WTC11 (cell line): ENCODE measurements at regions of chr17 and their contacts with region 1.

Region 1: DNA sequence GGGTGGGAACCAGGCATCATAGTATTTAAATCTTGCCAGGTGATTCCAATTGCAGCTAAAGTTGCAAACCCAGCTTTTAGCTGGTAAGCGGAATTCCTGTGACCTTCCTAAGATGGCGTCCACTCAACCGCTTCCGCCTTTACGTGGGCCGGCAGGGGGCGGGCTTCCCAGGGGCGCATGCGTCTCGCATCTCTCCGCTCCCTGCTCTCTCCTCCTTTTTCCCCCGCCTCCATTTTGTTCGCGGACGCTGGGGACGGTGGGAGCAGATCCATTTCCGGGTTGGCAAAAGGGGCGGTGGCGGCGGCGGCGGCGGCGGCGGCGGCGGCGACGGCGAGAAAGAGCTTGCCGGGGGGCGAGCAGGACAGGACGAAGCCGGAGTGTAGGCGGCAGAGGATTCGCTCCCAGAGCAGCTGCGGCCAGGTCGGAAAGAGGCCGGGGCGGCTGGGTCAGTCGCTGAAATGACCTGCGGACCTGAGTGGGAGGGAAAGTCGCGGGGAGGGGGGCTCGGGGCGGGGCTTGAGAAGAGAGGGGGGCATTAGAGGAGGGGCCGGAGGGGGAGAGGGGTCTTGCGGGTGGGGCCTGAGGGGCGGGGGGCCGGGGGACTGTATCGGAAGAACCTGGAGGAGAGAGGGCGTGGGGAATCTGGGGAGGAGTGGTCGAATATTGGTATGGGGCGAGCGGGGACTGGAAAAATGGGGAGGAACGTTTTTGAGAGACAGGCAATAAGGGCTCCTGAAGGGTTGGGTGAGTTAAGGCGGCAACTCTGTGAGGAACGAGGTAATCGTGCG is at the start of gene WIPF2:
- DNase-seq: peak; percentile 99
- ATAC-seq: peak; percentile 90
- H3K4me3 Mint-ChIP-seq: peak within 1 kb of the TSS; percentile 90
- H3K27ac Mint-ChIP-seq: peak within 1 kb of the TSS; percentile 100
- H3K4me1 Mint-ChIP-seq: peaks cover 18% of the 10 kb centered on the region
- H3K27me3 Mint-ChIP-seq: no peaks in the 10 kb centered on the region; the same call in 1 of the 2 replicates
- CTCF ChIP-seq: peak; percentile 81
- total RNA-seq, gene WIPF2: 23.0 to 24.6 TPM (median 23.8 TPM) in 3 replicates

Region 2: DNA sequence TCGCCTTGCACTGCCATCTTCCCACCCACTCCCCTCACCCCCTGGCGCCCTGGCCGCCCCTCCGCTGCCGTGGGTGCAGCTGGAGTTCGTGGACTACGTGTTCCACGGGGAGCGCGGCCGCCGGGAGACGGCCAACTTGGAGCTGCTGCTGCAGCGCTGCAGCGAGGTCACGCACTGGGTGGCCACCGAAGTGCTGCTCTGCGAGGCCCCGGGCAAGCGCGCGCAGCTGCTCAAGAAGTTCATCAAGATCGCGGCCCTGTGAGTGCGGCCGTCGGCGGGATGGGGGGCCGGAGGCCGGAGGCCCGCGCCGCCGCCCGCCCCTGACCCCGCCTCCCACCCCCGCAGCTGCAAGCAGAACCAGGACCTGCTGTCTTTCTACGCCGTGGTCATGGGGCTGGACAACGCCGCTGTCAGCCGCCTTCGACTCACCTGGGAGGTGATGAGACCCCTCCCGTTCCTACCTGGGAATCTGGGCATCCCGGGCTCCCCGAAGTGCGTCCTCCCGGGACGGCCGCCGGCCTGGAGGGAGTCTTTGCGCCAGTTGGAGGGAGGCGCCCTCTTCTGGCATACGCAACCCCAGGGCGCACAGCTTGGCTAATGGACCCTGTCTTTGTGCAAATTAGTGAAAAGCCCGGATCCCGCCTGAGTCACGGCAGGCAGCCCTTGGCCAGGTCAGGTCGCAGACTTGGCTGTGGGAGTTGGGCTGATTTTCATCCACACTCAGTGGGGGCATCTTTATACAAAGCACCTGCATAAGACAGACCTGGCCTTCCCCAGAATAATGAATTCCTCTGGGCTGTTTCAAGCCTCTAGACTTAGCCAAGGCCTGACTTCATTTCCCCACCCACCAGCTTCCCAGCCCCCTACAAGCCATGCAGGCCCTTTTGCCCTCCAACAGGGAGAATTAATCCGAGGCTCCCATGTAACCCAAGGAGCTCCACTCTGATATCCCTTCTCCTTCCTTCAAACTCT is 27.7 kb before region 1 on chr17:
- CTCF ChIA-PET with region 1: interaction called, 44 read pairs
- POLR2A ChIA-PET with region 1: interaction called, 3 read pairs
- DNase-seq: peak; percentile 84
- ATAC-seq: peak; percentile 73
- H3K4me3 Mint-ChIP-seq: peak overlapping the region; percentile 82
- H3K27ac Mint-ChIP-seq: no peak overlapping the region
- H3K4me1 Mint-ChIP-seq: peaks cover 37% of the 10 kb centered on the region
- H3K27me3 Mint-ChIP-seq: peaks cover 3% of the 10 kb centered on the region; the same call in 1 of the 2 replicates
- CTCF ChIP-seq: no peak; the same call in 1 of the 2 replicates

Region 3: DNA sequence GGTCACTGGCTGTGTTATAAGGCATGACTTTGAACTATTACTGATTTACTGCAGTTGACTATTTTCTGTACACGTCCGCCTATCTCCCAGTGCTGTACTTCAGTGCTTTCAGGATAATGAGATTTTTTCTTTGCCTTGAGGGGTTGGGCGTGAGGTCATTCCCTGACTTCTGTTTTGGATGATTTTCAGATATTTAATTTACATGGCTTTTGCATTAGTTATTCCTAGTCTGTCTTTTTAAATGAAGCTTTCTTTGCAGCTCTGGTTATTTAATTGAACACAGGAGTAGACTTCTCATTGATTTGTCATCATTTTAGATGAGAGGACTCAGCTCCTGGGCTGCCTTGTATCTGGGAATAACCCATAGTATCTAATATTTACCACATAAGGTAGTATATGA is 23.5 kb after region 1 on chr17:
- CTCF ChIA-PET with region 1: interaction called, 35 read pairs
- POLR2A ChIA-PET with region 1: interaction called, 5 read pairs
- DNase-seq: no peak
- ATAC-seq: no peak
- H3K4me3 Mint-ChIP-seq: no peak overlapping the region
- H3K27ac Mint-ChIP-seq: no peak overlapping the region
- H3K4me1 Mint-ChIP-seq: no peaks in the 10 kb centered on the region
- H3K27me3 Mint-ChIP-seq: no peaks in the 10 kb centered on the region
- CTCF ChIP-seq: no peak

Region 4: DNA sequence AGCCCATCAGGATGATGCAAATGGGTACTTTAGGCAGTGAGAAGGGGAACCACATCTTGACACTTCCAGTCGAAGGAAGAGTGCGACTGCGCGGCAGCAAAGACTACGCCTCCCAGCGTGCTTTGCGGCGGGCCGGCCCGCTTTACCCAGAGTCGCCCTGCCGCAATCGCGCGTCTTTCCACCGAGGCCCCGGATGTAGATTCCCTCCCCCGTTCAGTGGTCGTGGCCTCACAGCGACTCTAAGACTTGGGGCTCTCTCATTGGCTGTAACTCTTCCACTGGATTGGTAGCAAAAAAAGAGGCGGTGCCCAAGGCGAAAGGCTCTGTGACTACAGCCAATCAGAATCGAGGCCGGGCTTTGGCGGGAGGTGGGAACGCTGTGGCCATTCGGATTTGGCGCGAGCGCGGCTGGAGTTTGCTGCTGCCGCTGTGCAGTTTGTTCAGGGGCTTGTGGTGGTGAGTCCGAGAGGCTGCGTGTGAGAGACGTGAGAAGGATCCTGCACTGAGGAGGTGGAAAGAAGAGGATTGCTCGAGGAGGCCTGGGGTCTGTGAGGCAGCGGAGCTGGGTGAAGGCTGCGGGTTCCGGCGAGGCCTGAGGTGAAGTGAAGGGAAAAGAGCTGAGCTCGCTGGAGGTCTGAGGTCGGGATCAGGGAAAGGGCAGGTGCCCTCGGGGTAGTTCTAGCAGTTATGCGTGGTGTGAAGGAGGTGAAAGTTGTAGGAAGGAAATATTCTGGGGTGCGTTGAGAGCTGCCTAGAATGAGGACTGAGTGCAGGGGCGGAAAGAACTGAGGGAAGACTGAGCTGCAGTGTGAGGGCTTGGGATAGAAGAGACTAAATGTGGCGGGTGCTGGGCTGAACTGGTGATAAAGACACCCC is 68.5 kb after region 1 on chr17 and contains the start of gene CDC6:
- CTCF ChIA-PET with region 1: interaction called, 31 read pairs
- POLR2A ChIA-PET with region 1: interaction called, 3 read pairs
- DNase-seq: peak; percentile 98
- ATAC-seq: peak; percentile 97
- H3K4me3 Mint-ChIP-seq: peak within 1 kb of the TSS; percentile 98
- H3K27ac Mint-ChIP-seq: peak within 1 kb of the TSS; percentile 98
- H3K4me1 Mint-ChIP-seq: peaks cover 14% of the 10 kb centered on the region
- H3K27me3 Mint-ChIP-seq: no peaks in the 10 kb centered on the region
- CTCF ChIP-seq: no peak
- total RNA-seq, gene CDC6: 85.9 to 125 TPM (median 87.9 TPM) in 3 replicates